H1 (cell line): ENCODE measurements at regions of chr12 and their contacts with region 1.

Region 1: DNA sequence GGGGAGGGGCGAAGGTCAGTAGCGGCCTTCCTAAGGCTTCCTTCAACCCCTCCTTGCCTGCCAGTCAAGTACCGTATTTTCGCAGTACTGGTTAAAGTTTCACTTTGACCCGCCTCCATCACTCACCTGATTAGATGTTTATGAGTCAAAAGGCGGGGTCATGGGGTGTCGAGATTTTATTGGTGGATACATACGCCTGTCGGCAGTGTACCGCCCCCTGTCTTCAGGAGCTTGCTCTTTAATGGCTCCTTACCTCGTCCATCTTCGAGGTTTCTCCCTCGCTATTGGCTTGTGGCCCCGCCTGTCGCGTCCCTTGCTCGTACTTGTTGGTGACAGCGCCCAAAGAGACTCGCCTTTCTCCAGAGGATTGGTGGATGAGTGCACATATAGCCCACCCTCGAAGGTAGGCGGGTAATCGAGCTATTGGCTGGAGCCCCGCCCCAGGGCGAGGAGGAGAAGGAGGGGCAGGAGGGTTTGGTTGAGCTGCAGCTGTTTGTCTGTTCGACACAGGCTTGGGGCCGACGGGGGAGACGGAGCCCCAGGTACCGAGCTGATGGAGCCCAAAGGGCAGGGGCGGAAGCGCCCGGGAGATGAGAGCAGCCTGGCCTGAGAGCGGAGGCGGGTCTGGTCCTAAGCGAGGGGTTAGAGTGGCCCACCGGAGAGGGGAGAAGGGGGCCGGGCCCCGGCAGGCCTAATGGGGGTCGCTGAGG is at the start of gene RAB5B:
- DNase-seq: peak; percentile 94 to 100
- H3K4me3 ChIP-seq: peak within 1 kb of the TSS; percentile 65 to 93 (median 88)
- H3K27ac ChIP-seq: peak within 1 kb of the TSS; percentile 12; the same call in 1 of the 2 replicates
- H3K4me1 ChIP-seq: peaks cover 0 to 4% (median 1%) of the 10 kb centered on the region in 4 experiments; a peak in 4 of 7 replicates
- H3K27me3 ChIP-seq: no peaks in the 10 kb centered on the region
- CTCF ChIP-seq: no peak
- EP300 ChIP-seq: no peak
- POLR2A ChIP-seq: peak; percentile 88 to 93
- RAD21 ChIP-seq: no peak
- total RNA-seq, gene RAB5B: 56.7 and 65.6 TPM in 2 replicates

Region 2: GRCh38 chr12:55926738-55927587 is 46.8 kb before region 1 on chr12:
- CTCF ChIA-PET with region 1: interaction called, 4 read pairs
- POLR2A ChIA-PET with region 1: interaction called, 12 read pairs
- DNase-seq: peak; percentile 84 to 94
- H3K4me3 ChIP-seq: peak overlapping the region; percentile 90 to 100 (median 94)
- H3K27ac ChIP-seq: peak overlapping the region; percentile 84
- H3K4me1 ChIP-seq: peaks cover 8 to 19% (median 11%) of the 10 kb centered on the region in 4 experiments; a peak in 6 of 7 replicates
- H3K27me3 ChIP-seq: peaks cover 0 to 6% (median 1%) of the 10 kb centered on the region in 4 experiments; a peak in 2 of 7 replicates
- CTCF ChIP-seq: peak; percentile 51 to 66 (median 59)
- EP300 ChIP-seq: no peak
- POLR2A ChIP-seq: peak in 1 of 2 experiments; percentile 39; a peak in 2 of 3 replicates
- RAD21 ChIP-seq: peak; percentile 23 to 35; a peak in 3 of 4 replicates

Region 3: GRCh38 chr12:55991110-55991509 is 17.4 kb after region 1 on chr12:
- CTCF ChIA-PET with region 1: interaction called, 14 read pairs
- POLR2A ChIA-PET with region 1: interaction called, 16 read pairs
- DNase-seq: no peak
- H3K4me3 ChIP-seq: no peak overlapping the region
- H3K27ac ChIP-seq: no peak overlapping the region
- H3K4me1 ChIP-seq: no peaks in the 10 kb centered on the region
- H3K27me3 ChIP-seq: no peaks in the 10 kb centered on the region
- CTCF ChIP-seq: no peak
- EP300 ChIP-seq: no peak
- POLR2A ChIP-seq: no peak
- RAD21 ChIP-seq: no peak

Region 4: DNA sequence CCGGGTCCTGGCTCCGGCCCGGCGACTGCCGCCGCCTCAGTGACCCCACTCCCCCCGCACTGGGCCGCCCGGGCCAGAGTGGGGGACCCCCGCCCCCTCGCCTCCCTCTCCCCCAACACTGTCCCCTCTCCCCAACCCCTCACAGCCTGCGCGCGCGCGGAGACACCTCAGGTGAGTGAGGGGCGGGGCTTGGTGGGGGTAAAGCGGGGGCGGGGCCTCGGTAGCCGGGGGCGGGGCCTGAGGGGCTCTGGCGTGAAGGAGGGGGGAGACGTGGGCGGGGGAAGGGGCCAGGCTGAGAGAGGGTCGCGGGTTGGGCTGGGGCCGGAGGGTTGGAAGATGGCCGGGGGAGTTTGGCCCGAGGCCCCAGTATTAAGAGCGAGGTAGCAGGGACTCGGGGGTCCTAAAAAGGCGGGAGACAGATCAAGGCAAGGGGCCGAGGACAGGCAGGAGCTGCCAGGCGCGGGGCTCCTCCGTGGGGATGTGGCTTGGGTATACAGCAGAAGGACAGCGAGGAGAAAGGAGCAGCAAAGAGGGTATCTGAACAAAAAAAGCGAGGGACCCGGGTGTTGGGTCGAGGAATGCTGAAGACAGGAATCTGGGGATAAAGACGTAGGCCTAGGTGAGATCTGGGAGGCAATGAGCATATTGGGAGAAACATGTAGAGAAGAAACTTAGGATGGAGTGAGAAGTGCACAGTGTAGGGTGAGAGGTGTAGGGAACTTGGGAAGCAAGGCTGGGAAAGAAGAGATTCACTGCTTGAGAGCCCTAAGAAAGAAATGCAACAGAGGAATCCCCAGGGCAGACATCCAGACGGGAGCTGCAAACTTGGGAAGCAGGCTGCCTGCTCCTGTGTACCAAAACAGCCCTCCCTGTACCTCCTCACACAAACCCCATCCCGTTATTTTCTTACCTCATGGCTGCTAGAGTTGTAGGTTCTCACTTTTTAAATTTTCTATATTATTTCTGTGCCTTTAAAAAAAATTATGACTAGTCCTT is 34.1 kb after region 1 on chr12:
- CTCF ChIA-PET with region 1: interaction called, 4 read pairs
- POLR2A ChIA-PET with region 1: interaction called, 16 read pairs
- DNase-seq: peak in 1 of 2 experiments; percentile 94
- H3K4me3 ChIP-seq: peak overlapping the region; percentile 52 to 90 (median 83)
- H3K27ac ChIP-seq: peak overlapping the region; percentile 62
- H3K4me1 ChIP-seq: peaks cover 0 to 4% (median 2%) of the 10 kb centered on the region in 4 experiments; a peak in 3 of 7 replicates
- H3K27me3 ChIP-seq: no peaks in the 10 kb centered on the region
- CTCF ChIP-seq: no peak
- EP300 ChIP-seq: no peak
- POLR2A ChIP-seq: peak; percentile 63
- RAD21 ChIP-seq: no peak

Region 5: GRCh38 chr12:56020423-56021184 is 46.9 kb after region 1 on chr12 and contains the start of gene IKZF4:
- CTCF ChIA-PET with region 1: no interaction called
- POLR2A ChIA-PET with region 1: interaction called, 14 read pairs
- DNase-seq: peak in 1 of 2 experiments; percentile 81
- H3K4me3 ChIP-seq: peak within 1 kb of the TSS; percentile 37 to 60 (median 52)
- H3K27ac ChIP-seq: peak within 1 kb of the TSS; percentile 73
- H3K4me1 ChIP-seq: peaks cover 8 to 25% (median 16%) of the 10 kb centered on the region in 4 experiments
- H3K27me3 ChIP-seq: no peaks in the 10 kb centered on the region
- CTCF ChIP-seq: no peak
- EP300 ChIP-seq: no peak
- POLR2A ChIP-seq: peak in 1 of 2 experiments; percentile 69; a peak in 2 of 3 replicates
- RAD21 ChIP-seq: no peak
- total RNA-seq, gene IKZF4: 12.5 and 13.3 TPM in 2 replicates